ENCODE measurements at regions of chr11 and their contacts with region 1.

Region 1: DNA sequence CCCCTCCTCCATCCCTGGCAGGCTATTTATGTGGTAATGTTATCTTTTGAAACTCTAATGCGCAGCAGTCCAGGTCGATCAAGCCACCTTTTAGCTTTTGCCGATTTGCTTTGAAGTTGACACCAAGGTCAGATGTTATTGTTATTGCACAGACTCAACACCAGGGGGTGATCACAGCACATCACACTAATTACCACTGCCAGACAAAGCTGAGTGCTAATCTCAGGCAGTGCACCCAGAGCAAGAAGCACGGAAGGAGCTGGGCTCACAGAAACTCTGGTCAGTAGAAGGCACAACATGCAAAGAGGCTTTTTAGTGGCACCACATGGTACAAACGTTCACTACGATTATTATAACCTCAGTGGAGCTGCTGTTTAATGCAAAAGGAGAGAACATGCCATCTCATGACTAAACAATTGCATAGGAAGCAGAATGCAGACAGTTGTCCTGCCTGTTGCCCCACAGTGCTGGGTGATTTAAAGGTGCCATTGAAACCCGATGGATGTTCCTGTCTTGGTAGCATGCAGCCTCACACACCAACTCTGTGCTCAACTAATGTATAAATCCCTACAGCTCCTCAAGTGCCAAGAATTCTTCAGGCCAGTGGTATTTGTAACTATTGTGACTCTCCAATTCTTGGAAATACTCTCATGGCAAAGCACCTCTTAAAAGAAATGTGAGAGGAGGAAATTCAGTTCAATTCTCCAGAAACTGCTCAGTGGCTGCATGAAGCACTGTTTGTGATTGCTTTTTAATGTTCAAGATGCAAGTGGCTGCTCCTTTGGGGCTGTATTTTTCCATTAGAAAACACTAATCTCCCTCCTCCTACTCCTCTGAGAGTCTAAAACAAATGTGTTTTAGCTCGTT is 353.9 kb upstream of the DDI1 start:
- DNase-seq: peak; percentile 9 to 83
- H3K4me3 ChIP-seq: no peak overlapping the region
- H3K27ac ChIP-seq: peak overlapping the region in 1 of 2 donors; percentile 33
- H3K4me1 ChIP-seq: peaks cover 0 to 2% of the 10 kb centered on the region in 2 donors
- H3K27me3 ChIP-seq: no peaks in the 10 kb centered on the region
- CTCF ChIP-seq: peak; percentile 78 to 88 (median 80)

Region 2: GRCh38 chr11:103338621-103339484 is 343.7 kb before region 1 on chr11:
- intact Hi-C with region 1: no loop called
- DNase-seq: no peak
- H3K4me3 ChIP-seq: no peak overlapping the region
- H3K27ac ChIP-seq: no peak overlapping the region
- H3K4me1 ChIP-seq: no peaks in the 10 kb centered on the region
- H3K27me3 ChIP-seq: no peaks in the 10 kb centered on the region
- CTCF ChIP-seq: no peak

Region 3: GRCh38 chr11:103773059-103773458 is 90.5 kb after region 1 on chr11:
- intact Hi-C with region 1: loop called (anchors 5 kb)
- DNase-seq: no peak
- H3K4me3 ChIP-seq: no peak overlapping the region
- H3K27ac ChIP-seq: peak overlapping the region; percentile 72 to 79
- H3K4me1 ChIP-seq: peaks cover 0 to 24% of the 10 kb centered on the region in 2 donors
- H3K27me3 ChIP-seq: no peaks in the 10 kb centered on the region
- CTCF ChIP-seq: no peak

Region 4: DNA sequence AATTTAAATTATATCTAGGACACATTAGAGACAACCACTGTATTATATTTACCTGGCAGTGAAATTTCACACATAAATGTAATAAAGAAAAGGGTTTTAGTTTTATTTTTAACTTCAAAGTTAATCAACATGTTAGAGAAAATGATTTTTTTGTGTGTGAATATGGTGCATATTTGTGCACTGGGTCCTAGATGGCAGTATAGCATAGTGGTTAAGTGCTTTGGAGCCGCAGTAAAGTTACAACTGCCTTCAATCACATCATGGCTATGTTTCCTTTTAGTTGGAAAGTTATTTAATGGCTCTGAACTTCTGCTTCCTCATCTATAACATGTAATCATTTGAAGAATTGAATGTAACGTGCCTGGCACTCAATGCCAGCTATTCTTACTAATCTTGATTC is 245.0 kb after region 1 on chr11:
- intact Hi-C with region 1: loop called (anchors 10 kb)
- DNase-seq: no peak
- H3K4me3 ChIP-seq: no peak overlapping the region
- H3K27ac ChIP-seq: no peak overlapping the region
- H3K4me1 ChIP-seq: no peaks in the 10 kb centered on the region
- H3K27me3 ChIP-seq: no peaks in the 10 kb centered on the region
- CTCF ChIP-seq: peak in 1 of 3 experiments; percentile 37

Region 5: GRCh38 chr11:104106136-104106754 is 423.7 kb after region 1 on chr11:
- intact Hi-C with region 1: loop called (anchors 5 kb)
- DNase-seq: no peak
- H3K4me3 ChIP-seq: no peak overlapping the region
- H3K27ac ChIP-seq: no peak overlapping the region
- H3K4me1 ChIP-seq: peaks cover 0 to 25% of the 10 kb centered on the region in 2 donors
- H3K27me3 ChIP-seq: no peaks in the 10 kb centered on the region
- CTCF ChIP-seq: no peak

Region 6: DNA sequence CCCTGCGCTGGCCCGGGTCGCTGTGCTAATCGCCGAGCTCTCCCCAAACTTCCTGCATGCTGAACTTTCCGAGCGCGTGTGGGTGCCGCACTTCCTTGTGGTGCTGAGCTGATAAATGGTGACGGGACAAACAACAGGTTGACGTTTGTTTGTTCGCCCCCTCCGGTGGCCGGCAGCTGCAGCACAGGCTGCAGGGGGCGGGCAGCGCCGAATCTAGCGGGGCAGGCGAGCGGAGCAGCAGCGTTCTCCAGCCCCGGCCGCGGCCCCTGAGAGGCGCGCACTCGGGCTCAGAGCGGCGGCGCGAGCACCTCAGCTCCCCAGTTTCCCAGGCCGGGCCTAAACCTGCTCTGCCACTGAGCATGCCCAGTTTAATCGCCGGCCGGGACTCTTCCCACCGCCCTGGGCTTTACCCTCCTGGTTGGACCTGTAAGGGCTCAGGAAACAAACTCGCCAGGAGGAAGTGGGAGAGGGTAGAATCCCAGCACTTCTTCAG is 481.5 kb after region 1 on chr11 and contains the start of gene PDGFD:
- intact Hi-C with region 1: loop called (anchors 5 kb)
- DNase-seq: peak; percentile 24 to 83
- H3K4me3 ChIP-seq: peak within 1 kb of the TSS; percentile 83 to 84
- H3K27ac ChIP-seq: peak within 1 kb of the TSS; percentile 71 to 72
- H3K4me1 ChIP-seq: no peaks in the 10 kb centered on the region
- H3K27me3 ChIP-seq: no peaks in the 10 kb centered on the region
- CTCF ChIP-seq: peak; percentile 37 to 59 (median 39)
- total RNA-seq, gene PDGFD: 50.6 TPM